Gastrocnemius medialis (tissue), 4 donors: ENCODE measurements at regions of chr22 and their contacts with region 1.

Region 1: GRCh38 chr22:28120691-28121592 is 201.9 kb upstream of the PITPNB start:
- DNase-seq: no peak
- ATAC-seq: no peak
- H3K4me3 ChIP-seq: no peak overlapping the region
- H3K27ac ChIP-seq: no peak overlapping the region
- H3K4me1 ChIP-seq: peaks cover 21 to 25% of the 10 kb centered on the region in 2 donors
- H3K27me3 ChIP-seq: no peaks in the 10 kb centered on the region
- CTCF ChIP-seq: no peak
- POLR2A ChIP-seq: no peak

Region 2: DNA sequence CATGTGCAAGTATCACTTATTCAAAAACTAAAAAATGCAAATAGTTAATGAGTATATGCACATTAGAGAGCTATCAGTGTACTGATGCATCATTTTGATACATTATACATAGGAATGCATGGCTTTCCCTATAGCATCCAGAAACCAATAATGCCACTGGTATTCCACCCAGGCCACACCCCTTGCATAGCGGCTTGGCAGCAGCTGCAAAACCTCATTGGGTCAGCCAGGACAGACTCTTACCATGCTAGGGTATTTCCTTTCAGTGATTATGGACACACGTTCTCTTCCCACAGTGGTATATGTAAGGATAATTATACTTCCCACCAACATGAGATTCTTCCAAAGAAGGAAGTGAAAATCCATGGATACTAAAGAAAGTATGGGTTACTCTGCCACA is 56.0 kb before region 1 on chr22:
- in situ Hi-C with region 1: loop called in 1 of 4 experiments (anchors 10 kb)
- intact Hi-C with region 1: no loop called
- DNase-seq: no peak
- ATAC-seq: no peak
- H3K4me3 ChIP-seq: no peak overlapping the region
- H3K27ac ChIP-seq: no peak overlapping the region
- H3K4me1 ChIP-seq: no peaks in the 10 kb centered on the region
- H3K27me3 ChIP-seq: no peaks in the 10 kb centered on the region
- CTCF ChIP-seq: no peak
- POLR2A ChIP-seq: no peak